AG04450 (cell line): ENCODE measurements at regions of chr6 and their contacts with region 1.

Region 1: GRCh38 chr6:138115877-138116660 is 8.8 kb upstream of the PERP start:
- DNase-seq: peak; percentile 37
- H3K4me3 ChIP-seq: no peak overlapping the region
- H3K27ac ChIP-seq: no peak overlapping the region
- H3K27me3 ChIP-seq: peaks cover 23% of the 10 kb centered on the region
- CTCF ChIP-seq: peak; percentile 65

Region 2: DNA sequence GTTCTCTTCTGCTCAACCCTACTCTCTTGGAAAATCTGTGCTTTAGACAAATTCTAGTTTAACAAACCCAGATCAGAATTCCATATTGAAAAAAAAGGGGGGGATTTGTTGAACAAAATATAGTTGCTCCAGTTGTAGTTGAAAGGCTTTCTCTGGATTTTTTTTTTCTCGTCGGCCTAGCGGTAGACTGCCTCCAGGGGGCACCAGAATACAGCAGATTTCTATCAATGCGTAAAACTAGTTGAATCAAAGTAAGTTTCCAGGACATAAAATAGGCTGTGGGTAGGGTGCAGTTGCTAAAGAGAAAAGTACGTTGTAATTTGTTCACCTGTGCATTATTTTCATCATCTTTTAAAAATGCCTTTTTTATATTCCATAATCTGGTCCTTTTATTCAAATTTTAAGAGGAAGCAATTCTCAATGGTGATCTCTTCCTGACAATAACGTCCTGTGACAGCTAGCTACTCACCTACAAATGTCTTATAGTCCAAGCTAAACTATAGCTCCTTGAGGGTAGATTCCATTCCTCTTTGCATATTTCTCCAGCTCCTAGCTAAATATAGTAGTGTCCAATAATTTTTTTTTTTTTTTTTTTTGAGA is 114.2 kb before region 1 on chr6:
- CTCF ChIA-PET with region 1: interaction called, 98 read pairs
- POLR2A ChIA-PET with region 1: no interaction called
- DNase-seq: peak; percentile 36
- H3K4me3 ChIP-seq: no peak overlapping the region
- H3K27ac ChIP-seq: no peak overlapping the region
- H3K27me3 ChIP-seq: no peaks in the 10 kb centered on the region
- CTCF ChIP-seq: peak; percentile 93

Region 3: DNA sequence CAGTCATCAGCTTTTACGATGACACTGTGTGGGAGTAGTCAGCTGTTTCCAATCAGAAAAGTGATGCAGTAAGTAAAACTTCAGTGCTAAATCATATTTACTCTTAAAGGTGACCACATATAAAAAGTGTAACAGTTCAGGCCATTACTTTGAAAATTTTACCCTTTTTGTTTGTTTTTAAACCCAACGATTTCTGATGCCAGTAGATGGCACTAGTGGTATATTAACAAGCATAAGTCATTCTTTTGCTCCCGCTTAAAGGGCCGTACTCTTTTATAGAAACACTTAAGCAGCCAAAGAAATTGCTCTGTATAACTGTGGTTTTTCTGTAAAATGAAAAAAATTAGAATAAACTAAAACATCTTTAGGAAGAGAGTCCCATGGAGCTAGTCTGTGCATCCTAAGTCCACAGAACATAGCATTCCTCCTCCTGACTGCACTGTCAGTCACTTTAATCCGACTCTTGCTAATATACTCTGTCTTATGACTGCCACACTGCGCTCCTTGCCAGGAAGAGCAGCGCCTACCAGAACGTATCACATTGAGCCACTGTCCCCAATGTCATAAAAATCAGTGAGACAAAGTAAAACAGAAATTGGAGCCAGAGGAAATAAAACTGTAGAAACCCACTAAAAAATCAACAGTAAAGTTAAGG is 313.0 kb after region 1 on chr6:
- CTCF ChIA-PET with region 1: interaction called, 10 read pairs
- POLR2A ChIA-PET with region 1: no interaction called
- DNase-seq: peak; percentile 41
- H3K4me3 ChIP-seq: no peak overlapping the region
- H3K27ac ChIP-seq: no peak overlapping the region
- H3K27me3 ChIP-seq: no peaks in the 10 kb centered on the region
- CTCF ChIP-seq: peak; percentile 62

Region 4: DNA sequence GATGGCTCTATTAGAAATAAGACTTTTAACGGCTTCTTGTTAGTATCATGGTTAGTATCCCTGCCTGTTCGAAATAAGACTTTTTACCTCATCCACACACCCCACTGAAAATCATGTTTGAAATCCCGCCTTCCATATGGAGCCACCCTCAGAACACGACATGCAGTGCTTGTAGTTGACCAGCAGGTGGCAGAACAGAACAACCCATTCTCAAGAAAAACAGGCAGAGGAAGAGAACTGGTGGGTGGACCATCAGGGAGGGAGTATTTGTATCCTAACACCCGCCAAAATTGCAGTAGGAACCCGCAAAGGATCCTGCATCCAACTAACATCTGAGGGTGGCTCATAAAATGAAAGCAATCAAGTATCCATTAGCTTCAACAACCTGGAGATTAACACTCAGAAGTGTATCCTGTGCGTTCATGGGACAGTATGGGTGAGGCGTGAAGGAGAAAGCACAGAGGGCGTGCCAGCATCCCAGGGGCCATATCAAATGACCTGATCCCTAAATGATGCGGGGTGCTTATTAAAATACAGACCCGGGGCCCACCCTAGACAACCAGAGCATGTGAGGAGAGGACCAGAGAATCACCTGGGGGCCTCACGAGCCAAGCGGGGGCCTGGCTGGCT is 472.9 kb after region 1 on chr6:
- CTCF ChIA-PET with region 1: interaction called, 14 read pairs
- POLR2A ChIA-PET with region 1: no interaction called
- DNase-seq: peak; percentile 67
- H3K4me3 ChIP-seq: no peak overlapping the region
- H3K27ac ChIP-seq: no peak overlapping the region
- H3K27me3 ChIP-seq: no peaks in the 10 kb centered on the region
- CTCF ChIP-seq: peak; percentile 92

Region 5: DNA sequence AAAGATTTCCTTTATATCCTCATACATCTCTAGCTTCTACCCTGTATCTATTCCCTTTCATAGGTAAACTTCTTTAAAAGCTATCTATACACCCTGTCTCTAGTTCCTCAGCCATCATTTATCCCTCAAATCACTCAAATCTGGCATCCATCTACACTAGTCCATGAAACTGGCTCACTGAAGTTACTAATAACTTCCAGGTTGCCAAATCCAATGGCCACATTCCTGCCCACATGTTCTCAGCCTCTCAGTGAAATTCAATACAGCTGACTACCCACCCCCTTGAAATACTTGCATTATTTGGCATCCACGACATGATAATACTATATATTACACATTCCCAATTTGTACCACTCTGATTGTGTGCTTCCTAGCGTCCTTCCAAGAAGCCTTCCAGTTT is 863.3 kb after region 1 on chr6:
- CTCF ChIA-PET with region 1: no interaction called
- POLR2A ChIA-PET with region 1: no interaction called
- DNase-seq: no peak
- H3K4me3 ChIP-seq: no peak overlapping the region
- H3K27ac ChIP-seq: no peak overlapping the region
- H3K27me3 ChIP-seq: no peaks in the 10 kb centered on the region
- CTCF ChIP-seq: no peak

Region 6: DNA sequence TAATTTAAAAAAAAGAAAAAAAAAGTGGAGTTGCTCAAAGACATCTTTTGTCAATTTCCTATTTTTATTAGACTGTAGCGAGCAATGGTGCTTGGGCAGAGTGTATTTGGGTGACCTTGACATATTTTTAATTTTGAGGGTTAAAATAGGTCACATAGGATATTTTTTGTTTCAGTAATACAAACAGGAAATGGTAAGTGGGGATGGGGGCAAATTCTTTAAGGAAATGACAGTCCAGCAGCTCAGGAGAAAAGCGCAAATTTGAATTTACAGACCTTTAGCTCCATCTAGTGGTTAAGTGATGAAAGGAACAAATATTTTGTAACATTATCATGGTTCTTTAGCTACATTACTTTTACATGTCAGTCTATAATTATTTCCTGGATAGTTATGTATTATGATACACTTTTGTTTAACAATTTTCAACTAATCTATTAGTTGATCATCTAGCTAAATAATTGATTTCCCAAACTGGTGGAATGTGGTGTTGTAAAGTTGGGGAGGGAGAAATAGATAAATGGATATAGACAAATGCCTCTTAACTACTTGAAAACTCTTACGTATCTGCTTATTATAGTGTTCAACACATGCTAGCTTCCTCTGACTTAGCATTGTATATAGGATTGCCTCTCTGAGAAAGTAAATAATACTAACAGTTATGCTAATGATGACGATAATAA is 1248.4 kb after region 1 on chr6:
- CTCF ChIA-PET with region 1: interaction called, 13 read pairs
- POLR2A ChIA-PET with region 1: no interaction called
- DNase-seq: no peak
- H3K4me3 ChIP-seq: no peak overlapping the region
- H3K27ac ChIP-seq: no peak overlapping the region
- H3K27me3 ChIP-seq: no peaks in the 10 kb centered on the region
- CTCF ChIP-seq: peak; percentile 60